HCT116 (cell line): ENCODE measurements at regions of chr6 and their contacts with region 1.

Region 1: DNA sequence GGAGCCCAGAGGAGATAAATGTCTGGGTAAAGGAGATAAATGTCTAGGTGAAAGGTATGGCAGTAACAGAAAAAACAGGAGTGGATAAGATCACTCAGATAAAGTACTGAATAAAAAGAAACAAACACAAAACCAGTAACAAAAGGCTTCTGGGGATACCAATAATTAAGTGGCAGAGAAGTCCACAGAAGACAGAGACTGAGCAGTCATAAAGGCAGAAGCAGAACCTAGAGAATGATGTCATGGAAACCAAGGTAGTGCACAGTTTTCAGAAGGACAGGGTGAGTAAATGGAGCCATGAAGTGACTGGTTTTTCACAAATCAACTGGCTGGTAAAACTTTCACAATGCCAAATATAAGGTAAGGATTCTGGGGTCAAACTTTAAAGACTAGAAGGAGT is 80.9 kb upstream of the PLN start:
- DNase-seq: no peak
- ATAC-seq: no peak
- H3K4me3 ChIP-seq: no peak overlapping the region
- H3K27ac ChIP-seq: no peak overlapping the region
- H3K4me1 ChIP-seq: no peaks in the 10 kb centered on the region; a peak in 1 of 4 replicates
- H3K27me3 ChIP-seq: no peaks in the 10 kb centered on the region
- CTCF ChIP-seq: no peak
- POLR2A ChIP-seq: no peak
- RAD21 ChIP-seq: no peak

Region 2: GRCh38 chr6:117215353-117216090 is 1251.7 kb before region 1 on chr6:
- CTCF ChIA-PET with region 1: no interaction called
- POLR2A ChIA-PET with region 1: no interaction called
- RAD21 ChIA-PET with region 1: no interaction called
- intact Hi-C with region 1: loop called (anchors 2 kb)
- DNase-seq: no peak
- ATAC-seq: no peak
- H3K4me3 ChIP-seq: no peak overlapping the region
- H3K27ac ChIP-seq: no peak overlapping the region
- H3K4me1 ChIP-seq: no peaks in the 10 kb centered on the region
- H3K27me3 ChIP-seq: no peaks in the 10 kb centered on the region
- CTCF ChIP-seq: no peak
- POLR2A ChIP-seq: no peak
- RAD21 ChIP-seq: no peak